HEK293 (cell line): ENCODE measurements at regions of chr16 and their contacts with region 1.

Region 1: DNA sequence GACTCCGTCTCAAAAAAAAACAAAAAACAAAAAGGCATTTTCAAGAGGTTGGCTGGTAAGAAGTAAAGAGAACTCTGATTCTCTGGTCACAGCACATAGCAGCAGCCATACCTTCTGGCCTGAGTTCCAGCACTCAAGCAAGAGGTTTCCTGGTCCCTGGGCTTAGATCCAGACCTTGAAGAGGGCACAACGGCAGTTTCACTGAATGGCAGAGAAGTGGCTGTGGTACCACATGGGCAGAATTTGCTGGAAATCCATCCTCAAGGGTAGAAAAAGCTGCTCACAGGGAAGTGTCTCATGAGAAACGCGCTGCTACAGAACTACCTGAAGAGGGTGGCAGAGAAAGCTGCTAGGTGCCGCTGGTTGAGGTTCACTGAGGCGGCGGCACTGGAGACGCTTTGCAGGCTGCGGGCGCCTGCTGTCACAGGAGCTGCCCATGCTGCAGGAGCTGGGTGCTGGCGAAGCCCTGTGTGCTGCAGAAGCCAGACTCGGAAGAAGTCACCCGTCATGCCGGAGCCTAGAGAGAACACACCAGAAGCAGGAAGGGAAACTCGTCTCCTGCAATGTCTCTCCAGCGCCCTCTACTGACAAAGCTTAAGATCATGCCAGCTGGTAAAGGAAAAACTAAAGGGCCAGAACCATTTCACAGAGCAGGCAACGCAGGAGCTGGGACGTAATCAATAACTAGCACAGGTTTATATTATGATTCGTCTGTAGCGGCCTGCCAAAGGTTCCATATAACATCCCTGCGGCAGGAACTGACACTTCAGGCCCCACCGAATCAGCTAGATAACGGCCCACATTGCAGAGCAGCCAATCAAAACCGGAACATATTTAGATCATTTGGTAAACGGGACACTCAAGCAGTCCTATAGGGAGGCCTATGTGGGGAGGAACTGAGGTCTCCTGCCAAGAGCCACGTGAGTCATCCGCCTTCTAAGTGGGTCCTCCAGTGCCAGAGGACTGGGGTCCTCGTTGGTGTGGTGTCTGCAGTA is 5.4 kb upstream of the ZNF213 start:
- H3K4me3 ChIP-seq: peak overlapping the region; percentile 13
- H3K27ac ChIP-seq: peak overlapping the region; percentile 34; the same call in 1 of the 2 replicates
- H3K4me1 ChIP-seq: no peaks in the 10 kb centered on the region; the same call in 1 of the 2 replicates
- CTCF ChIP-seq: peak; percentile 87

Region 2: GRCh38 chr16:3023669-3024478 is 105.6 kb before region 1 on chr16 and contains the starts of genes HCFC1R1 and THOC6:
- CTCF ChIA-PET with region 1: interaction called, 5 read pairs
- POLR2A ChIA-PET with region 1: interaction called, 13 read pairs
- H3K4me3 ChIP-seq: peak within 1 kb of the TSS; percentile 72
- H3K27ac ChIP-seq: peak within 1 kb of the TSS; percentile 85
- H3K4me1 ChIP-seq: peaks cover 27% of the 10 kb centered on the region
- CTCF ChIP-seq: no peak; the same call in 1 of the 2 replicates

Region 3: DNA sequence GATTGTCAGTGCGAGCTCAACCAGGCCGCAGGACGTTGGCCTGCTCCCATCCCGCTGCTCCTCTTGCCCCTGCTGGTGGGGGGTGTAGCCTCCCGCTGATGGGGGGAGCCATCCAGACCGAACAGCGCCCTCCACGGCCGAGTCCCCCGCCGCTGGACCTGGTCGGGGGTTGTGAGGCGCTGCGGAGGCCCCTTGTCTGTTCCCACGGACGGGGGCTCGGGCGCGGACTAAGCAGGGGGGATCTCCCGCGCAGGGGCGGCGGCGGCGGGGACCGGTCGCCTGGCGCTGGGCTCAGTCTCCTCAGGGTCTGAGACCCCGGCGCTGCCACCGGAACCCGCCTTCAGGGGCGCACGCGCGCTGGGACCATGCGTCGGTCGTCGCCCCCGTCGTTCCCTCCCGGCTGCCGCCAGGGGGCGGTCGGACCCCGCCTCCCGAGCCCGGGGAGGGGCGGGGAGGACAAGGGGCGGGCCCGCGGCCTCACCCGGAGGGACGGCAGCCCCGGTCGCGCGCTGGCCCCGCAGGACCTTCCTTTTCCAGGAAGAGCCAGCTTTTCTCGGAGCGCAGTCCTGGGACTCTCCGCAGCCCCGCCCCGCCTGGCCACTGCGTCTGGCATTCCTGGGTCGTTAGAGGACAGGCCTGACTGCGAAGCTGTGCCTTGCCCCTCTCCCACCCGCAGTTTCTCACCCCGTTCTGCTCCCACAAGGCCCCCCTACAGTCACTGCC is 70.3 kb before region 1 on chr16:
- CTCF ChIA-PET with region 1: interaction called, 54 read pairs
- POLR2A ChIA-PET with region 1: interaction called, 17 read pairs
- H3K4me3 ChIP-seq: peak overlapping the region; percentile 87
- H3K27ac ChIP-seq: peak overlapping the region; percentile 77; the same call in 1 of the 2 replicates
- H3K4me1 ChIP-seq: peaks cover 3% of the 10 kb centered on the region
- CTCF ChIP-seq: peak; percentile 99

Region 4: DNA sequence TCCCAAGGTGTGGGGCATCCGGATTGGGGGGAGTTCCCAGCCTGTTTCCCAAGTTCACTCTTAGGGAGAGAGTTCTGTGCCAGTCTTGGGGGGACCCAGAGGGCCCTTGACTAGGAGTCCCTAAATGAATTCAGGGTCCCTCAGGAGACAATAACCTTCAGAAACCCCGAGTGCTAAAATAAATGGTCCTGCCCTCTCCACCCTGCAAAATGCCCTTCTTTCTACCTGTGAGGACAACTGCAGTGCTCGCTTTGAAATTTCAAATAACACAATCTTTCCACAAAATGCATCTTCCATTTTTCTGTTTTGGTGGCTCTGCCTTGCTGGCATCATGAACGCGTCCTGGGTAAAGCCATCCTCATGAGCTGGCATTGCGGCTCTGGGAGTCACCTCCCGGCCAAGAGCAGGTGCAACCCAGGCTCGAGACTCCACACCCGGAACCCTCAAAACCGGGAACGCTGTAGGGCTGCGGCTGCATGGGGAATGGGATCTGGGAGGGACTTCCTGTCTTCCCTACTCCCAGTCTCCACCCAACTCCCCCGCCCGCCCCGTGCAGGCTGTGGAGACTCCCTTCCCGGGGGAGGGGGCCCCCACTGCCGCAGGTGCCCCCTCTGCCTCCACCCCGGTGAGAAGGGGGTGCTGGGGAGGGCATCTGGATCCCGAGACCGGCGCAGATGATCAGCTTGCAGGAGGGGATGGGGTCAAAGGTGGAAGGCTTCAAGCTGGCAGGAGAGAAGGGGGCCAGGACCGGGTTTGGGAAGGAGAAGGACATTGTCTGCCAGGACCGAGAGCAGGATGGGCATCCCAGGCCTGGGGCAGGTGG is 17.2 kb before region 1 on chr16 and contains the start of gene ZNF205:
- CTCF ChIA-PET with region 1: interaction called, 14 read pairs
- POLR2A ChIA-PET with region 1: interaction called, 14 read pairs
- H3K4me3 ChIP-seq: peak within 1 kb of the TSS; percentile 74
- H3K27ac ChIP-seq: peak within 1 kb of the TSS; percentile 81; the same call in 1 of the 2 replicates
- H3K4me1 ChIP-seq: peaks cover 4% of the 10 kb centered on the region
- CTCF ChIP-seq: peak; percentile 42; the same call in 1 of the 2 replicates

Region 5: GRCh38 chr16:3143612-3144320 is 14.3 kb after region 1 on chr16:
- CTCF ChIA-PET with region 1: interaction called, 20 read pairs
- POLR2A ChIA-PET with region 1: interaction called, 20 read pairs
- H3K4me3 ChIP-seq: no peak overlapping the region
- H3K27ac ChIP-seq: no peak overlapping the region
- H3K4me1 ChIP-seq: no peaks in the 10 kb centered on the region
- CTCF ChIP-seq: no peak

Region 6: DNA sequence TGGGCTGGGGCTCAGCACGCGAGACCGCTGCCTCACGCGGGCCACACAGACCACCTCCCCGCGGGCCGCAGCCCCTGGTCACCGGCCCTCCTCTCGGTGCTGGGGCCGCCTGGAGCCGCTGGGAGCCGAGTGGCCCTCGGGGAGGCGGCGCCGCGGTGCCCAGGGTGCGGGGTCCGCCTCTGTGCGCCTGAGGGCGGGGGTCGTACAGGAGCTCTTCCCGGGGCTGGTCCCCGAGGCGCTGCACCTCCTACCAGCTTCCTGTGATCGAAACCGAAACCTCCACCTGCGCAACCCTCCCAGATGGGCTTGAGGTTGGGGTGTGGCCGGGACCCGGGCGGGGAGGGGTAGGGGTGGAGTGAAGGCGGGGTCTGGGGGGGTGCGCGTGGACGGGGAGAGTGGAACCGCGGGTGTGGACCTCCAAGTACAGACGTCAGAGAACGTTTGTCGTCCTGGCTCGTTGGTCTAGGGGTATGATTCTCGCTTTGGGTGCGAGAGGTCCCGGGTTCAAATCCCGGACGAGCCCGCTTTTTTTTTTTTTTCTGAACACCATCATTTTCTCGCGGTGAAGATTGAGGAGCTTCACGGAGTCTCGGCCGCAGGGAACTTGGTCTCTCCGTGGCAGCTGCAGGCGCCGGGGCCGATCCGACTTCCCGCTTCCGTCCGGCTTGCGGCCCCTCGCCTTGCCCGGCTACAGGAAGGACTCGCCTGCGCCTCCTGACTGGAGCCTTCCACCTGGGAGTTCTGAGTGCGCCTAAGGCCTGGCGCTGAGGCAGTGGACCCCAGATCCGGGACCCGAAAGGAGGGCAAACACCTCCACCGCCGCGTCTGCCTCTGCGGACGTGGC is 29.3 kb after region 1 on chr16:
- CTCF ChIA-PET with region 1: interaction called, 11 read pairs
- POLR2A ChIA-PET with region 1: interaction called, 19 read pairs
- H3K4me3 ChIP-seq: peak overlapping the region; percentile 60
- H3K27ac ChIP-seq: peak overlapping the region; percentile 91
- H3K4me1 ChIP-seq: no peaks in the 10 kb centered on the region
- CTCF ChIP-seq: 0 out of 2 replicates have a peak, but pooled peaks have one; percentile 32

Region 7: GRCh38 chr16:3282730-3283524 is 153.5 kb after region 1 on chr16 and contains the start of gene ZNF263:
- CTCF ChIA-PET with region 1: no interaction called
- POLR2A ChIA-PET with region 1: no interaction called
- H3K4me3 ChIP-seq: peak within 1 kb of the TSS; percentile 74
- H3K27ac ChIP-seq: peak within 1 kb of the TSS; percentile 94
- H3K4me1 ChIP-seq: no peaks in the 10 kb centered on the region
- CTCF ChIP-seq: no peak